ENCODE measurements at regions of chr12 and their contacts with region 1.

Region 1: DNA sequence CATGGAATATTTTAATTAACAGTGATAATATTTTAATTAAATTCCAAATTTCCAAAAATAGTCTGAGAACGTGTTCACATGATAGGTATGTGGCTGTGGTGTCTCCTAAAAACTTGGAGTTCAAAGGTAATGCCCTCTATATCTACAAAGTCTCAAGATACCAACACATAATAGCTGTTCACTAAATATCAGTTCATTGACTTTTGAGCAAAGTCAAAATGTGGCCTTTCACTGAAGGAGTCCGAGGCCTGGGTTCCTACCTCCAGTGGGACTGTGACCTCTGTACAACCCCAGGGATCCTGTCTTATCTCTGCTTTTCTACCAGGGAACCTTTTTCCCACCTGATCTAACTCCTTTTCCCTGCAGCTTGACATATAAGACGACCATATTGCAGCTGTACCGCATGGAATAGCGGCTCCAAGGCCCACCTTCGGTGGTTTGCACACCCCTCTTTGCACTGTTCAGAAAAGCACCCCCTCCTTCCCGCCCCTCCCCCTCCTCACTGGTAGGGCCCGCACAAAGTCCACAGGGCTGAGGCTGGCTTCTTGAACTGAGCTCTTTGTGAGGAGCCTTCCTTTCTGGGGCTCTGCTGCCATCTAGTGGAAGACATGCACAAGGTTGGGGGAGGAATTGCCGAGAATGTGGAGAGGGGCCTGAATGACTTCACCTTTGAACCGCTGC is 3.1 kb downstream of the CCND2 start:
- DNase-seq: peak; percentile 78
- CTCF ChIP-seq: peak; percentile 85

Region 2: GRCh38 chr12:3988519-3989448 is 287.9 kb before region 1 on chr12:
- CTCF ChIA-PET with region 1: interaction called, 128 read pairs
- POLR2A ChIA-PET with region 1: no interaction called
- DNase-seq: peak; percentile 58
- CTCF ChIP-seq: no peak

Region 3: GRCh38 chr12:4089121-4089606 is 187.5 kb before region 1 on chr12:
- CTCF ChIA-PET with region 1: interaction called, 12 read pairs
- POLR2A ChIA-PET with region 1: no interaction called
- DNase-seq: no peak
- CTCF ChIP-seq: no peak

Region 4: GRCh38 chr12:4141348-4142270 is 135.1 kb before region 1 on chr12:
- CTCF ChIA-PET with region 1: interaction called, 16 read pairs
- POLR2A ChIA-PET with region 1: no interaction called
- DNase-seq: no peak
- CTCF ChIP-seq: no peak

Region 5: GRCh38 chr12:4191642-4192041 is 85.0 kb before region 1 on chr12:
- CTCF ChIA-PET with region 1: no interaction called
- POLR2A ChIA-PET with region 1: no interaction called
- DNase-seq: peak; percentile 42
- CTCF ChIP-seq: no peak

Region 6: GRCh38 chr12:4246116-4246515 is 30.5 kb before region 1 on chr12:
- CTCF ChIA-PET with region 1: interaction called, 12 read pairs
- POLR2A ChIA-PET with region 1: no interaction called
- DNase-seq: peak; percentile 75
- CTCF ChIP-seq: no peak

Measured in GM10248 (cell line).